ENCODE measurements at regions of chr10 and their contacts with region 1.

Region 1: GRCh38 chr10:36779234-36779846 is 346.1 kb upstream of the ANKRD30A start:
- DNase-seq: peak; percentile 100
- ATAC-seq: peak; percentile 98
- H3K4me3 ChIP-seq: no peak overlapping the region
- H3K27ac ChIP-seq: peak overlapping the region; percentile 13
- H3K4me1 ChIP-seq: peaks cover 25% of the 10 kb centered on the region
- H3K27me3 ChIP-seq: no peaks in the 10 kb centered on the region
- CTCF ChIP-seq: peak; percentile 100

Region 2: GRCh38 chr10:35613597-35614226 is 1165.6 kb before region 1 on chr10:
- CTCF ChIA-PET with region 1: interaction called, 56 read pairs
- POLR2A ChIA-PET with region 1: no interaction called
- intact Hi-C with region 1: loop called (anchors 1 kb)
- DNase-seq: peak; percentile 92
- ATAC-seq: peak; percentile 96
- H3K4me3 ChIP-seq: no peak overlapping the region
- H3K27ac ChIP-seq: no peak overlapping the region
- H3K4me1 ChIP-seq: peaks cover 8% of the 10 kb centered on the region
- H3K27me3 ChIP-seq: no peaks in the 10 kb centered on the region
- CTCF ChIP-seq: peak; percentile 100

Region 3: GRCh38 chr10:35916791-35917190 is 862.5 kb before region 1 on chr10:
- CTCF ChIA-PET with region 1: no interaction called
- POLR2A ChIA-PET with region 1: no interaction called
- intact Hi-C with region 1: loop called (anchors 2 kb)
- DNase-seq: peak; percentile 64
- ATAC-seq: peak; percentile 21
- H3K4me3 ChIP-seq: no peak overlapping the region
- H3K27ac ChIP-seq: no peak overlapping the region
- H3K4me1 ChIP-seq: peaks cover 22% of the 10 kb centered on the region
- H3K27me3 ChIP-seq: no peaks in the 10 kb centered on the region
- CTCF ChIP-seq: peak; percentile 68

Region 4: DNA sequence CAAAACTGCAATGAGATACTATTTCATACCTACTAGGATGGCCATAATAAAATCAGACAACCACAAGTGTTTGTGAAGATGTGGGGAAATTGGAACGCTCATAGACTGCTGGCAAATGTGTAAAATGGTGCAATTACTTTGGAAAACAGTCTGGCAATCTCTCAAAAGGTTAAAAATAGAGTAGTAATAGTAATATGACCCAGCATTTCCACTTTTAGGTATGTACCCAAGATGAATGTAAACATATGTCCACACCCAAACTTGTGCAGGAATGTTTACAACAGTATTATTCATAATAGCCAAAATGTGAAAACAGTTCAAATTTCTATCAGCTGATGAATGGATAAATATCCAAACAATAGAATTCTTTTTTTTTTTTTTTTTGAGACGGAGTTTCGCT is 385.5 kb before region 1 on chr10:
- CTCF ChIA-PET with region 1: interaction called, 3 read pairs
- POLR2A ChIA-PET with region 1: no interaction called
- intact Hi-C with region 1: loop called (anchors 5 kb)
- DNase-seq: peak; percentile 99
- ATAC-seq: peak; percentile 88
- H3K4me3 ChIP-seq: no peak overlapping the region
- H3K27ac ChIP-seq: peak overlapping the region; percentile 21
- H3K4me1 ChIP-seq: peaks cover 13% of the 10 kb centered on the region
- H3K27me3 ChIP-seq: no peaks in the 10 kb centered on the region
- CTCF ChIP-seq: no peak

Region 5: GRCh38 chr10:36681751-36682632 is 97.3 kb before region 1 on chr10:
- CTCF ChIA-PET with region 1: interaction called, 17 read pairs
- POLR2A ChIA-PET with region 1: interaction called, 3 read pairs
- intact Hi-C with region 1: loop called (anchors 1 kb)
- DNase-seq: peak; percentile 65
- ATAC-seq: no peak
- H3K4me3 ChIP-seq: no peak overlapping the region
- H3K27ac ChIP-seq: no peak overlapping the region
- H3K4me1 ChIP-seq: peaks cover 20% of the 10 kb centered on the region
- H3K27me3 ChIP-seq: no peaks in the 10 kb centered on the region
- CTCF ChIP-seq: no peak

Region 6: GRCh38 chr10:36789974-36790373 is 10.6 kb after region 1 on chr10:
- CTCF ChIA-PET with region 1: no interaction called
- POLR2A ChIA-PET with region 1: no interaction called
- intact Hi-C with region 1: no loop called
- DNase-seq: no peak
- ATAC-seq: peak; percentile 13; the same call in 1 of the 2 replicates
- H3K4me3 ChIP-seq: no peak overlapping the region
- H3K27ac ChIP-seq: no peak overlapping the region
- H3K4me1 ChIP-seq: no peaks in the 10 kb centered on the region
- H3K27me3 ChIP-seq: no peaks in the 10 kb centered on the region
- CTCF ChIP-seq: no peak

Region 7: GRCh38 chr10:36880898-36881297 is 101.6 kb after region 1 on chr10:
- CTCF ChIA-PET with region 1: interaction called, 17 read pairs
- POLR2A ChIA-PET with region 1: no interaction called
- intact Hi-C with region 1: loop called (anchors 1 kb)
- DNase-seq: peak; percentile 93
- ATAC-seq: peak; percentile 86
- H3K4me3 ChIP-seq: no peak overlapping the region
- H3K27ac ChIP-seq: no peak overlapping the region
- H3K4me1 ChIP-seq: no peaks in the 10 kb centered on the region
- H3K27me3 ChIP-seq: 0 out of 2 replicates have a peak, but pooled peaks cover 3% of the 10 kb centered on the region
- CTCF ChIP-seq: peak; percentile 86

Measured in PC-3 (cell line).